PC-3 (cell line): ENCODE measurements at regions of chr14 and their contacts with region 1.

Region 1: DNA sequence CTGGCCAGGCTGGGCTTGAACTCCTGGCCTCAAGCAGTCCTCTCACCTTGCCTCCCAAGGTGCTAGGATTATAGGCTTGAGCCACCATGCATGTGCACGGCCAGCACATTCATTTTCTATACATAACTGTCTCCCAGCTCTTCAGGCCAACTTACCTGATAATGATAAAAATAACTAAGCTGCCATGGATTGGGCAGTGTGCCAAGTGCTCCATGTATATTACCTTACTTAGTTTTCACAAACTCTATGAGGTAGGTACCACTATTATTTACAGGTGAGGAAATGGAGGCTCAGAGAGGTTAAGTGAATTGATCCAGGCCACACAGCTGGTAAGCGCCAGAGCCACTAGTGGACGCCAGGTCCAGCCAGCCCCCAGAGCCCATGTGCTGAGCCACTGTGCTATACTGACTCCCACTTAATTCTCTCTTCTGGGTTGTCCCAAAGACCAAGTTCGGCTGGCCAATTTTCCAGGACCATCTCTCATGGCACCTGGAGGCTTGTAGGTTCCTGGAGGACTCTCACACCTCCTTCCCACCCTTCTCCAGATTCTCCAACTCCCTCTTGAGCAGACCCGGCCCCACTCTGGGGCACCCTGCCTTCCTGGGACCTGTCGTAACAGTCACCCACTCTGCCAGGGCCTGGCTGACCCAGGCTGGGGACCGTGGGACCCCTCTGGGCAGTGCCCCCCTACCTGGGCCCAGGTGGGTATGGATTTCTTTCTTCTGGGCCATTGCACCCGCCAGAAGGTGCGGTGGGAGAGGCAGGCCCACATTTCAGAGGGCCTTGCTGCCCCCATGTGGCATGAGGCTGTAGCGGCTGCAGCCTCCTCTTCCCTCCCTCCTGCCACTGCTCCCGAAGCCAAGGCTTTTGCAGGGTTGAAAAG is 30.2 kb upstream of the CIPC start:
- DNase-seq: peak; percentile 95
- ATAC-seq: peak; percentile 78
- H3K4me3 ChIP-seq: no peak overlapping the region
- H3K27ac ChIP-seq: no peak overlapping the region
- H3K4me1 ChIP-seq: peaks cover 38% of the 10 kb centered on the region
- H3K27me3 ChIP-seq: no peaks in the 10 kb centered on the region
- CTCF ChIP-seq: peak; percentile 100

Region 2: DNA sequence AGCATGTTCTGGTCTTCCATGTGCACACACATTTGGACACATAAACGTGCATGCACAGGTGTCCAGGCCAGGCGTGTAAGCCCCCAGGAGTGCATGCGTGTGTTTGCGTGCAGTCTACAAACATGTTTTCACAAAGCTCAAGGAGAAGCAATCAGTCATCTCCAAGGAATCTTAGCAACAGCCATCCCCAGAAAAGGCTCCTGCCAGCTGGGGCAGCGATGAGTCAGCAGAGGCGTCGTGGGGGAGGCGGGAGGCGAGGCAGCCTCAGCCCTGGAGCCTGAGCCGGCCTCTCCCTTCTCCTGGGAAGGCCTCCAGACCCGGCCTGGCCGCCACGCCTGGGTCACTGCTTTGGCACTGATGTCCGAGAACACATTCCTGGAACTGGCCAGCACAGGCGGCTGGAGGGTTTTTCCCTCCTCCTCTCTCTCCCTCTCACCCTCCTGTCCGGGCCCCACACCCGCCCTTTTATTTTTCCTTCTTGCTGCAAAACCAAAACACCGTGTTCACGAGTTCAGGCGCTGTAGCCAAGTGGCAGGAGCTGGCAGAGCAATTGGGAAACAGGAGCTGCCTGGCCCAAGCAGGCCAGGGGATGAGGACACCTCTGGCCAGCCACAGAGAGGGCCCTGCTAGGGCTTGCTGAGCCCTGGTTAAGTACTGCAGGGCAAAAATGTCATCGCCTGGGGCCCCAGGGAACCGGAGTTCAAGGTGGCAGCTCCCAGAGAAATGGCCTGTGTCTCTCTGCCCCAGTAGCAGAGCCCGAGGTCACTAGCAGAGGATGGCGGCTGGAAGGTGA is 148.9 kb before region 1 on chr14:
- CTCF ChIA-PET with region 1: interaction called, 10 read pairs
- POLR2A ChIA-PET with region 1: interaction called, 3 read pairs
- intact Hi-C with region 1: loop called (anchors 1 kb)
- DNase-seq: peak; percentile 96
- ATAC-seq: peak; percentile 73
- H3K4me3 ChIP-seq: peak overlapping the region; percentile 28; the same call in 1 of the 2 replicates
- H3K27ac ChIP-seq: peak overlapping the region; percentile 97
- H3K4me1 ChIP-seq: peaks cover 60% of the 10 kb centered on the region
- H3K27me3 ChIP-seq: no peaks in the 10 kb centered on the region
- CTCF ChIP-seq: 0 out of 2 replicates have a peak, but pooled peaks have one; percentile 8

Region 3: DNA sequence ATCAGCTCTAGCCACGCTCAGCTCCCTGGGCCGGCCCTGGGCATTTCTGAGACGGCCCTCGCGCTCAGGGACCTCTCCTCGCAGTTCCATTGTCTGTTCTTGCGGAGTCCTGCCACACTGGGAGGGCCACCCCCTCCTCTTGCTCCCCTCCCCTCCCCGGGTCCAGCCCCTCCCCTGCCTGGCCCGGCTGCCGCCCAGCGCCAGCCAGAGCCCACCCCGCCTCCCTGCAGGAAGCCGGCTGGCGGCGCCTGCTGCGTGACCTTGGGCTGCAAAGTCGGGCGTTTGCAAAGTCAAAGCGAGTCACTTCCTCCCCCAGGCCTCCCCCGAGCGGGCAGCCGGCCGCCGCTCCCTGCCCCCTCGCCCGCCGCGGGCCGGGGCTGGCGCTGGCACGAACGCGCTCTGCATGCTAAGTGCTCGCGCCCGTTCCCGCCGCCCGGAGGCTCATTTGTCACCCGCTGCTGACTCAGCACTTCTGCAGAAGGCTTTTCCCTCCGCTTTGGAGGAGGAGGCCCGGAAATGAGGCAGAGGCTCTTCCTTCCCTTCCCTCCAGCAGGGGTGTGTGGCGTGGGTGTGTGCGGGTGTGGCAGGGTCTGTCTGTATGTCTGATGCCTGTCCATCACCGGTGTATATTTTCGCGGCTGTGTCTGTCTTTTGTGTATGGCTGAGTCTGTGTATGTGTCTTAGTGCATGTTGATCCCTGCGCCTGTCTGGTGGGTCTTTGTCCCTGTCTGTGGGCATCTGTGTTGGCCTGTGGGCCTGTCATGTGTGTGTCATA is 111.4 kb before region 1 on chr14:
- CTCF ChIA-PET with region 1: interaction called, 12 read pairs
- POLR2A ChIA-PET with region 1: interaction called, 3 read pairs
- intact Hi-C with region 1: loop called (anchors 1 kb)
- DNase-seq: peak; percentile 99
- ATAC-seq: peak; percentile 52
- H3K4me3 ChIP-seq: peak overlapping the region; percentile 52
- H3K27ac ChIP-seq: peak overlapping the region; percentile 95
- H3K4me1 ChIP-seq: peaks cover 80% of the 10 kb centered on the region
- H3K27me3 ChIP-seq: no peaks in the 10 kb centered on the region
- CTCF ChIP-seq: no peak

Region 4: DNA sequence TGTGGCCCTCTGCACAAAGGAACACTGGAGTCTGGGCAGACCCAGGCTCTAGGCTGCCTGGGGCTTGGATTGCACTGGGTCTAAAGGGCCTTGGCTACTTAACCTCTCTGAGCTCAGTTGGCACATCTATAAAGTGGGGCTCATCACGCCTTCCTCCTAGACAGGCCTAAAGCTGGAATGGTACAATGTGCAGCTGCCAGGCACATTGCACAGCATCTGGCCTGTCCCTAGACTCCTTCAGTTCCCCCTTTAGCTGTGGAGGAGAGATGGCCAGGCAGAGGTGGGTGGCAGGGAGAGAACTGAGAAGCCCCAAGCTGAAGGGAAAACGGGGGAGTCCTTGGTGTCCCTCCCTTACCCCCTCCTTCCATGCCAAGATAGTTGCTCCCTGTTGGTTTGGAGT is 50.2 kb before region 1 on chr14:
- CTCF ChIA-PET with region 1: no interaction called
- POLR2A ChIA-PET with region 1: no interaction called
- intact Hi-C with region 1: no loop called
- DNase-seq: no peak
- ATAC-seq: no peak
- H3K4me3 ChIP-seq: no peak overlapping the region
- H3K27ac ChIP-seq: no peak overlapping the region
- H3K4me1 ChIP-seq: peaks cover 6% of the 10 kb centered on the region
- H3K27me3 ChIP-seq: no peaks in the 10 kb centered on the region
- CTCF ChIP-seq: no peak

Region 5: DNA sequence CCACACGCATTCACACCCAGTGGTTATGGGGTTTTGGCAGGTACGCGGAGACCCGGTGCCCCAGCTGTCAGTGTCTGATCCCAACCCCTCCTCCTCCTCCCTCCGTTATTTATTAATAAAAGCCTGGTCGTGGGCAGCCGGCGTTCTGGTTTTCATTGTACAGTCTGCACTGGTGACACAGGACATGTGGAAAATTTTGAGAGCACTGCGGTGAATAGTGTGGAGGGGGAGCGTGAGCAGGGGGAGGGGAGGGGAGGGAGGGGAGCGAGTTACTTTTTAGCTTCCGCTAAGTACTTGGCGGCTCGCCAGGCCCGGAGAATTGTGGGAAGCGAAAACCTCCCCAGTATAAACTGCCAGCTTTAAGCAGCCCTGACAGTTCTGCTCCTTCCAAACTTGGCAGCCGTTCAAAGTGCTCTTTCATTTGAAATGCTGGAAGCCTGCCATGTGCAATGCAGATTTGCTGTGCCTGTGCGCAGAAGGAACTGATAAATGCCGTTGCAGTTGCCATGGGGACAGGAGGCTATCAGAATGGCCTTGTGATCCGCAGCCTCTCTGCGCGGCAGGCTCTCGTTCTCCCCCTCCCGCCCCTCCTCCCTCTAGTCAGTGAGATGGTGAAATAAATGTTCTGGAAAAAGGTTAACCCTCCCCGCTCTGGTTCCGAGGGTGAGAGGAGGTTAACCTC is 27.7 kb before region 1 on chr14:
- CTCF ChIA-PET with region 1: no interaction called
- POLR2A ChIA-PET with region 1: no interaction called
- intact Hi-C with region 1: loop called (anchors 2 kb)
- DNase-seq: peak; percentile 100
- ATAC-seq: peak; percentile 33
- H3K4me3 ChIP-seq: peak overlapping the region; percentile 59
- H3K27ac ChIP-seq: peak overlapping the region; percentile 94
- H3K4me1 ChIP-seq: peaks cover 93% of the 10 kb centered on the region
- H3K27me3 ChIP-seq: no peaks in the 10 kb centered on the region
- CTCF ChIP-seq: no peak

Region 6: DNA sequence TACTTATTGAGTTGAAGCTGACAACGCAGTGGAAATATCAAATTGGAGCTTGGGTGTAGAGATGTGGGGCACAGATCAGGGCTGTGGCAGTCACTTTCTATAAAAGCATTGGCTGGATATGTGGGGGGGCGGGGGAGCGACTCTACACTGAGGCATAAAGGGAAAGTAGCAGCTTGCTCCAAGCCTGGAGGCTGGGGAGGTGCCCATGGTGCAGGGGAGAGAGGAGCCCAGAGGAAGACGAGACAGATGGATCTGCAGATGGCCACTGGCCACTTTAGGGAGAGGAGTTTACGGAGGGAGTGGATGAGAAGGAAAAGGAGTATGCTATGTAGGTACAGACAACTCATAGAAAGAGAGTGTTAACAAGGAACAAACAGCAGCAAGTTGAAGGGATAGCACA is 216.6 kb after region 1 on chr14:
- CTCF ChIA-PET with region 1: no interaction called
- POLR2A ChIA-PET with region 1: no interaction called
- intact Hi-C with region 1: no loop called
- DNase-seq: no peak
- ATAC-seq: no peak
- H3K4me3 ChIP-seq: no peak overlapping the region
- H3K27ac ChIP-seq: no peak overlapping the region
- H3K4me1 ChIP-seq: no peaks in the 10 kb centered on the region
- H3K27me3 ChIP-seq: no peaks in the 10 kb centered on the region
- CTCF ChIP-seq: no peak